Mammary epithelial cell (primary cell): ENCODE measurements at regions of chr2 and their contacts with region 1.

Region 1: GRCh38 chr2:43024515-43025011 is 201.8 kb downstream of the ZFP36L2 start:
- DNase-seq: no peak
- H3K4me3 ChIP-seq: no peak overlapping the region
- H3K27ac ChIP-seq: no peak overlapping the region
- H3K4me1 ChIP-seq: peaks cover 18% of the 10 kb centered on the region
- H3K27me3 ChIP-seq: no peaks in the 10 kb centered on the region
- CTCF ChIP-seq: peak; percentile 63 to 87

Region 2: GRCh38 chr2:42859006-42859552 is 165.5 kb before region 1 on chr2:
- CTCF ChIA-PET with region 1: interaction called, 4 read pairs
- dilution Hi-C with region 1: no loop called
- in situ Hi-C with region 1: no loop called
- intact Hi-C with region 1: loop called (anchors 1 kb)
- DNase-seq: peak; percentile 63
- H3K4me3 ChIP-seq: no peak overlapping the region
- H3K27ac ChIP-seq: no peak overlapping the region
- H3K4me1 ChIP-seq: peaks cover 35% of the 10 kb centered on the region
- H3K27me3 ChIP-seq: no peaks in the 10 kb centered on the region
- CTCF ChIP-seq: peak; percentile 93 to 95

Region 3: GRCh38 chr2:42974721-42975717 is 49.5 kb before region 1 on chr2:
- CTCF ChIA-PET with region 1: interaction called, 3 read pairs
- dilution Hi-C with region 1: no loop called
- in situ Hi-C with region 1: no loop called
- intact Hi-C with region 1: loop called (anchors 1 kb)
- DNase-seq: no peak
- H3K4me3 ChIP-seq: no peak overlapping the region
- H3K27ac ChIP-seq: peak overlapping the region; percentile 11
- H3K4me1 ChIP-seq: peaks cover 46% of the 10 kb centered on the region
- H3K27me3 ChIP-seq: no peaks in the 10 kb centered on the region
- CTCF ChIP-seq: peak; percentile 80 to 92

Region 4: DNA sequence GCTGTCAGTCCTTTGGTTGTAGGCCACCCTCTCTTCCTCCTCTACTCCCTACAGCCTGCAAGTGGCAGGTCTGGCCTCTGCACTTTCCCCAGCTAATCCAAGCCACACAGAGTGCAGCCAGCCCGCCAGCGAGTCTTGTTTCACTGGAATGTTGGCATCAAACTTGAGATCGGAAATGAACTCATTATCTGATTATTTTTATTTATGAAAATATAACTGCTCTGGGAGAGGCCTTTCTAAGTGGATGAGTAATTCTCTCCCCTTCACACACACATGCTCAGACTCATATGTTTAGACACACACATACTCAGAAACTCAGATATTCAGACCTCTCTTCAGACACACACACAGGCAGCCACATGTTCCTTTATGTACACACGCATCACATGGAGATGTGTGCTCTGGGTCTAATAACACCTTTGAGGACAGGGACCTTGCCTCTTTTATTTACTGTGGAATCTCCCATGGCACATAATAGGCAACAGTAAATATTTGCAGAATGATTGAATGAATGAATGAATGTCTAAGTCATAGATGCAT is 50.6 kb after region 1 on chr2:
- CTCF ChIA-PET with region 1: no interaction called
- dilution Hi-C with region 1: no loop called
- in situ Hi-C with region 1: no loop called
- intact Hi-C with region 1: loop called (anchors 1 kb)
- DNase-seq: peak; percentile 96
- H3K4me3 ChIP-seq: no peak overlapping the region
- H3K27ac ChIP-seq: peak overlapping the region; percentile 90
- H3K4me1 ChIP-seq: peaks cover 34% of the 10 kb centered on the region
- H3K27me3 ChIP-seq: no peaks in the 10 kb centered on the region
- CTCF ChIP-seq: peak in 1 of 2 donors; percentile 25

Region 5: DNA sequence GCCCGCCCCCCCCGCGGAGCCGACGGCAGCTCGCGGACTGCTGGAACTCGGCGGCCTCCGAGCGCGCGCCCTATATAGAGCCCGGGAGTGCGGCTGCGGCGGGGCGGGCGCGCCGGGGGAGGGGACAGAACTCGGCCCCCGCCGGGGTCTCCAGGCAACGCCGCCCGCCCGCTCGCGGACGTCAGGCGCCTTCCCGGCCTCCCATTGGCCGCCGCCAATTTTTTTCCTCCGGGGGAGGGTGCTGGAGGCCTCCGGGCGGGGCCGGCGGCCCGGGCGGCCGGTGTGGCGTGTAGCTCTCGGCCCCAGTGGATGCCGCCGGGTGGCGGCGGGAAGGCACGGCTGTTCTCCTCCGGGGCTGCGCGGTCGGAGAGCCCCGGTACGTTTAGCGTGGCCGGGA is 202.0 kb after region 1 on chr2 and contains the start of gene ZFP36L2:
- CTCF ChIA-PET with region 1: interaction called, 3 read pairs
- dilution Hi-C with region 1: no loop called
- in situ Hi-C with region 1: loop called (anchors 5 kb)
- intact Hi-C with region 1: loop called (anchors 1 kb)
- DNase-seq: peak; percentile 95
- H3K4me3 ChIP-seq: peak within 1 kb of the TSS; percentile 83 to 88 (median 86)
- H3K27ac ChIP-seq: peak within 1 kb of the TSS; percentile 88
- H3K4me1 ChIP-seq: peaks cover 29% of the 10 kb centered on the region
- H3K27me3 ChIP-seq: no peaks in the 10 kb centered on the region
- CTCF ChIP-seq: no peak
- total RNA-seq, gene ZFP36L2: 26.3 to 213 TPM

Region 6: GRCh38 chr2:43542285-43542937 is 517.8 kb after region 1 on chr2:
- CTCF ChIA-PET with region 1: no interaction called
- dilution Hi-C with region 1: no loop called
- in situ Hi-C with region 1: no loop called
- intact Hi-C with region 1: loop called (anchors 2 kb)
- DNase-seq: peak; percentile 23
- H3K4me3 ChIP-seq: no peak overlapping the region
- H3K27ac ChIP-seq: no peak overlapping the region
- H3K4me1 ChIP-seq: peaks cover 30% of the 10 kb centered on the region
- H3K27me3 ChIP-seq: no peaks in the 10 kb centered on the region
- CTCF ChIP-seq: peak; percentile 40